GM13977 (cell line): ENCODE measurements at regions of chr10 and their contacts with region 1.

Region 1: GRCh38 chr10:42690449-42691360 is 52.3 kb upstream of the ZNF33B start:
- DNase-seq: no peak
- CTCF ChIP-seq: no peak

Region 2: DNA sequence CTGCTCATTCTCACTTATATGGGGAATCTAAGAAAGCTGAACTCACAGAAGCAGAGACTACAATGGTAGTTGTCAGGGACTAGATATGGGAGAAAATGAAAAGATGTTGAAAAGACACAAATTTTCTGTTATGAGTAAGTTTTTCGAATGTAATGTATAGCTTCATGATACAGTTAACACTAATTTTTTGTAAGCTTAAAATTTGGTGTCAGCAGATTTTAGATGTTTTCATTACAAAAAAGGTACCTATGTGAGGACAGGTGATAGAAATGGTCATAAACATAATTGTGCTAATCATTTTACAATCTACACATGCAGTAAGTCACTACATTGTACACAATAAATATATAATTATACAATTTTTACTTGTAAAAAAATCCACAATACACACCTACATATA is 339.0 kb before region 1 on chr10:
- in situ Hi-C with region 1: no loop called
- DNase-seq: no peak
- CTCF ChIP-seq: no peak

Region 3: GRCh38 chr10:42594246-42594650 is 96.5 kb before region 1 on chr10:
- in situ Hi-C with region 1: loop called (anchors 25 kb)
- DNase-seq: no peak
- CTCF ChIP-seq: no peak